Thyroid gland (tissue), 4 donors: ENCODE measurements at regions of chr15 and their contacts with region 1.

Region 1: DNA sequence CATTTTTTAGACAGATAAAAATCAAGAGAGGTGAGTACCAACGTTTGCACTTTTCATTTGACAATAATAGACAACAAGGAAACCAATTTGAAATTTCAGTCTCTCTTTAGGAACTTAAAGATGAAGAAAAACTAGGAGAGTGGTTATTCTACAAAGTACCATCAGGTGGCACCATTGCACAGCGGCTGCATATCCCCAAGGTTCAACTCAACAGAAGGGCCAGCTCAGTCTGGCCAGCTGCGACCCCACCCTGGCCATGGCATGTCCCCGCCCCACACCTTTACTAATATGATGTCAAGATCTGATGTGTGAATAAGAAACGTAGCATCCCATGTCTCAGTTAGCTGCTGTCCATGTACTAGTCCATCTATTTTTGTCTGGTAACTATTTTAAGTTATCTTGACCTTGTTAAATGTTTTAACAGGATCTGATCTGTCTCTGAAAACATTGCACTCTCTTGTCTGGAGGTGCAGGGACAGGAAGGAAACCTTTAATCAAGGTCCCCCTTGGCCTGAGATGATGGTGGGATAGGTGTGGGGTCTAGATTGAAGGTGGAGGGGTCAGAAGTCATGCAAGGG is 35.5 kb upstream of the CGNL1 start:
- DNase-seq: peak; percentile 56
- H3K4me3 ChIP-seq: no peak overlapping the region
- H3K27ac ChIP-seq: peak overlapping the region in 1 of 3 donors; percentile 11
- H3K4me1 ChIP-seq: peaks cover 0 to 10% of the 10 kb centered on the region in 2 donors
- H3K27me3 ChIP-seq: no peaks in the 10 kb centered on the region
- CTCF ChIP-seq: peak; percentile 68 to 93 (median 87)
- POLR2A ChIP-seq: no peak

Region 2: DNA sequence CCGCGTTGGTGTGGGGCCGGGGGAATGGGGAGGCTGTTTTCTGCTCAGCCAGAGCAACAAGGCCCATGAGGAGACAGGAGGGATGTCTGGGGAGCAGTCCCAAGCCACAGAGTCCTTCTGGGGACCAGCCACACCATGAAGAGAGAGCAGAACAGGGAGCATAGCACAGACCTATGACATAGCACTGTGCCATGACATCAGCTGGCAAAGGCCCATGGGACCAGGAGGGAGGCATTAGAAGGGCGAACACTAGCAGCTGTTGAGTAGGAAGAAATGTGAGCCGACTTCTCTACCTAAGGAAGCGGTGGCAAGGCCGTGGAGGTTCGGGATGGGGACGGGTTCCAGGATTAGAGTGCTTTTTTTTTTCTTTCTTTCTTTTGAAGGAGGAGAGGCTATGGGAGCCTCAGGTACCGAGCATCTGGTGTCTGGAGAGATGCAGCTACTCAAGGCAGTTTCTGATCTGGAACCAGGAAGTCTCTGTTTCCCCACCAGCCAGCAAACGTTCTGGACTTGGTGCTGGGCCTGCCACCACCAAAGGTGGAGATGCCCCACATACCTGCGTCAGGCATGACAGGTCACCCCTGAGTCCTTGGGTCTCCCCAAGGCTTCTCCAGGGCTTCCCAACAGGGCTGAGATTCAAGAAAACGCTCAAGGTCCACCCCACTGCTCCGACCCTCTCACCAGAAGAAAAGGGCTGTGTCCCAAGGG is 41.8 kb before region 1 on chr15:
- intact Hi-C with region 1: no loop called
- DNase-seq: no peak
- H3K4me3 ChIP-seq: no peak overlapping the region
- H3K27ac ChIP-seq: no peak overlapping the region
- H3K4me1 ChIP-seq: no peaks in the 10 kb centered on the region
- H3K27me3 ChIP-seq: no peaks in the 10 kb centered on the region
- CTCF ChIP-seq: no peak
- POLR2A ChIP-seq: no peak

Region 3: GRCh38 chr15:57527382-57528091 is 186.8 kb after region 1 on chr15:
- intact Hi-C with region 1: loop called (anchors 5 kb)
- DNase-seq: peak; percentile 47 to 58
- H3K4me3 ChIP-seq: no peak overlapping the region
- H3K27ac ChIP-seq: peak overlapping the region in 1 of 3 donors; percentile 47
- H3K4me1 ChIP-seq: peaks cover 16 to 22% of the 10 kb centered on the region in 2 donors
- H3K27me3 ChIP-seq: no peaks in the 10 kb centered on the region
- CTCF ChIP-seq: peak in 5 of 6 experiments; percentile 32 to 87 (median 72)
- POLR2A ChIP-seq: no peak